MCF 10A (cell line): ENCODE measurements at regions of chr17 and their contacts with region 1.

Region 1: GRCh38 chr17:52283872-52284271 is 125.4 kb upstream of the CA10 start:
- DNase-seq: no peak
- H3K4me3 Mint-ChIP-seq: no peak overlapping the region
- H3K27ac Mint-ChIP-seq: no peak overlapping the region
- H3K4me1 Mint-ChIP-seq: no peaks in the 10 kb centered on the region
- H3K27me3 Mint-ChIP-seq: peaks cover 19% of the 10 kb centered on the region
- CTCF ChIP-seq: no peak

Region 2: DNA sequence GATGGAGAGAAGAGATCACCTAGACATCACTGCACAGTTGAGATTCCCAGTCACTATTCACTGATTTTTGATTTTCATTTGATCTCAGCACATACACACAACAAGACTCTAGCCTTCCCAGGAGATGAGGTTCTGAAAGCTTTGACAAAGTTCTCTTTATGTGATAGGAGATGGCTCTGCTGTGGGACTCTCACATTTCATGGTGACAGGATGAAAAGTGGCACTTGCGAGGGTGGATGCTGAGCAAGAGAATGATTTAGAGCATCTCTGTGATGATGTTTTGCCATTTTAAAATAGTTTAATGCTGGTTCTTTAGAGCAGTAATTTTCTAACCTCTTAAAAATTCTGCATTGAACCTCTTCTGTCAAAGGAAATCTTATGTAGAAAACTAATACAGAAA is 12.1 kb before region 1 on chr17:
- CTCF ChIA-PET with region 1: no interaction called
- POLR2A ChIA-PET with region 1: no interaction called
- intact Hi-C with region 1: loop called (anchors 1 kb)
- DNase-seq: no peak
- H3K4me3 Mint-ChIP-seq: no peak overlapping the region
- H3K27ac Mint-ChIP-seq: no peak overlapping the region
- H3K4me1 Mint-ChIP-seq: no peaks in the 10 kb centered on the region
- H3K27me3 Mint-ChIP-seq: peaks cover 46% of the 10 kb centered on the region
- CTCF ChIP-seq: no peak

Region 3: DNA sequence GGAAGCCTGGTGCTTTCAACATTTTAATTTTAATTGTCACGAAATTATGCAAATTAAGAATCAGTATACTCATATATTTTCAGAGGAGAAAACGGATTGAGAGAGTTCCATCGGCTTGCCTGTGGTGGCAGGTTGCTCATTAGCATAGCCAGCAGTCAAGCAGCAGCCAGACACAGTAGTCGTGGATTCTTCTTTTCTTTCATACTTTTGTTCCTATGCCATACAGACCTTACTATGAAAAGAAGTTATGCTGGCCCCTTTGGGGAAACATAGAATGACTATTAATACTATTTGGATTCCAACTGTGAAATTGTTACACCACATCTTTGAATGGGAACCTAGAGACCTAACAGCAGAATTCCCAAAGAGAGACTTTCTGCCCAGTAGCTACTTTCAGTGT is 492.4 kb after region 1 on chr17:
- CTCF ChIA-PET with region 1: no interaction called
- POLR2A ChIA-PET with region 1: no interaction called
- intact Hi-C with region 1: no loop called
- DNase-seq: no peak
- H3K4me3 Mint-ChIP-seq: no peak overlapping the region
- H3K27ac Mint-ChIP-seq: no peak overlapping the region
- H3K4me1 Mint-ChIP-seq: no peaks in the 10 kb centered on the region
- H3K27me3 Mint-ChIP-seq: peaks cover 35% of the 10 kb centered on the region
- CTCF ChIP-seq: no peak